ENCODE measurements at regions of chr17 and their contacts with region 1.

Region 1: DNA sequence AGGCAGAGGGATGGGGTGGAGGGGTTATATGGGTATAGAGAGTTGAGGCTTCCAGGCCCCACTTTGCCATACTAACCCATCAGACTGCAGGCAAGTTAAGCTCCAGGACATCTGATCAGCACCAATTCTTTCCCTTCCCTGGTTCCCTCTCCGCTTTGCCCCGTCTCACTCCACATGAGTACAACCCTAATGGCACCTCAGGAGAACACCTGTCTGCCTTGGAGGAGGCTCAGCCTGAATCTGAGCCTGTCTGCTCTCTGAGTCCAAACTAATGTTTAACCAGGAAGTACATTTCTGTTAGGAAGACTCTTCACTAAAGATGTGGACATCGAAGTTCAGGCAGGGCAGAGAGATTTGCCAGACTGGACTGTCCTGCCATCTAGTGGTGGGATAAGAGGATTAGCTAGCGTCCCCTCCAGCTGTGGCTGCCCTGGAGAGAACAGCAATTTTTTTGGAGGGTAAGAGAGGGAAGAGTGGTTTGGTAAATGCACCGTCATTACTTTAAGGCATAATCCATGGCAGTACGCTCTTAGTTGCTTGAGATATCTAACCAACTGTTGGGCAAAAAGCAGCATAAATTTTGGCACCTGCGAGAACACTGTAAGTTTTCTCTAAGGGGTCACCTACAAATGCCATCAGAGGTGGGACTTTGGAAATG is 29.2 kb upstream of the LRRC75A start:
- DNase-seq: peak; percentile 78 to 84
- H3K4me3 ChIP-seq: no peak overlapping the region
- H3K27ac ChIP-seq: peak overlapping the region; percentile 42 to 52
- H3K4me1 ChIP-seq: no peaks in the 10 kb centered on the region
- H3K27me3 ChIP-seq: no peaks in the 10 kb centered on the region
- CTCF ChIP-seq: peak; percentile 91 to 94 (median 92)
- POLR2A ChIP-seq: no peak

Region 2: DNA sequence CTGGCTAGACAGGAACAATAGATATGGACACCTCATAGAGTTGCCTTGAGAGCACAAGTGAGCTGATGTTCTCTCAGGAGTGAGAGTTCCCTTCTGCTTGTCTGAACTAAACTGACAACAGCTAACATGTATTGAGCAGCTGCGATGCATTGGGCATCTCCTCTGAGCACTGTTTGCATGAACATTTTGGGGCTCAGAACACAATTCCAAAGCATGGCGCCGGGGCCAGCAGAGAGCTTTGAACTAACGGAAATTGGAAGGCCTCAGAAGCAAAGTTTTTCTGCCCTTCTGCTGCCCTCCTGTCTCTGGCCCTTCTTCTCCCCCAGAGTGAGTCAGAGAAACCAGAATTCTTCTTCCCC is 67.7 kb before region 1 on chr17:
- intact Hi-C with region 1: loop called (anchors 1 kb)
- DNase-seq: no peak
- H3K4me3 ChIP-seq: no peak overlapping the region
- H3K27ac ChIP-seq: peak overlapping the region; percentile 25 to 30
- H3K4me1 ChIP-seq: no peaks in the 10 kb centered on the region
- H3K27me3 ChIP-seq: no peaks in the 10 kb centered on the region
- CTCF ChIP-seq: no peak
- POLR2A ChIP-seq: no peak

Measured in uterus (tissue), 4 donors.